Naive thymus-derived CD4-positive, alpha-beta T cell (primary cell): ENCODE measurements at regions of chr9 and their contacts with region 1.

Region 1: GRCh38 chr9:88889386-88889785 is 101.9 kb upstream of the S1PR3 start:
- DNase-seq: no peak
- ATAC-seq: no peak
- H3K4me3 ChIP-seq: no peak overlapping the region
- H3K4me3 Mint-ChIP-seq: no peak overlapping the region
- H3K27ac ChIP-seq: no peak overlapping the region
- H3K27ac Mint-ChIP-seq: no peak overlapping the region
- H3K4me1 ChIP-seq: no peaks in the 10 kb centered on the region
- H3K4me1 Mint-ChIP-seq: peaks cover under 1 to 40% (median 24%) of the 10 kb centered on the region in 7 donors
- H3K27me3 ChIP-seq: no peaks in the 10 kb centered on the region
- H3K27me3 Mint-ChIP-seq: peaks cover 6 to 34% (median 20%) of the 10 kb centered on the region in 5 donors

Region 2: GRCh38 chr9:88835038-88835466 is 54.3 kb before region 1 on chr9:
- CTCF ChIA-PET with region 1: no interaction called
- POLR2A ChIA-PET with region 1: no interaction called
- intact Hi-C with region 1: loop called in 1 of 2 experiments (anchors 10 kb)
- DNase-seq: peak in 7 of 9 donors; percentile 45 to 81 (median 79)
- ATAC-seq: peak; percentile 95
- H3K4me3 ChIP-seq: no peak overlapping the region
- H3K4me3 Mint-ChIP-seq: peak overlapping the region in 9 of 10 donors; percentile 2 to 82 (median 64)
- H3K27ac ChIP-seq: no peak overlapping the region
- H3K27ac Mint-ChIP-seq: peak overlapping the region in 6 of 9 donors; percentile 22 to 90 (median 69)
- H3K4me1 ChIP-seq: peaks cover 16 to 25% of the 10 kb centered on the region in 2 donors
- H3K4me1 Mint-ChIP-seq: peaks cover 9 to 35% (median 27%) of the 10 kb centered on the region in 7 donors
- H3K27me3 ChIP-seq: peaks cover 0 to 19% of the 10 kb centered on the region in 2 donors
- H3K27me3 Mint-ChIP-seq: peaks cover 55 to 82% (median 72%) of the 10 kb centered on the region in 5 donors

Region 3: GRCh38 chr9:88938625-88939024 is 49.2 kb after region 1 on chr9:
- CTCF ChIA-PET with region 1: no interaction called
- POLR2A ChIA-PET with region 1: no interaction called
- intact Hi-C with region 1: loop called in 1 of 2 experiments (anchors 1 kb)
- DNase-seq: no peak
- ATAC-seq: no peak
- H3K4me3 ChIP-seq: no peak overlapping the region
- H3K4me3 Mint-ChIP-seq: peak overlapping the region in 1 of 10 donors; percentile 2
- H3K27ac ChIP-seq: no peak overlapping the region
- H3K27ac Mint-ChIP-seq: no peak overlapping the region
- H3K4me1 ChIP-seq: no peaks in the 10 kb centered on the region
- H3K4me1 Mint-ChIP-seq: peaks cover 0 to 4% (median 0%) of the 10 kb centered on the region in 7 donors
- H3K27me3 ChIP-seq: no peaks in the 10 kb centered on the region
- H3K27me3 Mint-ChIP-seq: peaks cover 0 to 20% (median 10%) of the 10 kb centered on the region in 5 donors

Region 4: DNA sequence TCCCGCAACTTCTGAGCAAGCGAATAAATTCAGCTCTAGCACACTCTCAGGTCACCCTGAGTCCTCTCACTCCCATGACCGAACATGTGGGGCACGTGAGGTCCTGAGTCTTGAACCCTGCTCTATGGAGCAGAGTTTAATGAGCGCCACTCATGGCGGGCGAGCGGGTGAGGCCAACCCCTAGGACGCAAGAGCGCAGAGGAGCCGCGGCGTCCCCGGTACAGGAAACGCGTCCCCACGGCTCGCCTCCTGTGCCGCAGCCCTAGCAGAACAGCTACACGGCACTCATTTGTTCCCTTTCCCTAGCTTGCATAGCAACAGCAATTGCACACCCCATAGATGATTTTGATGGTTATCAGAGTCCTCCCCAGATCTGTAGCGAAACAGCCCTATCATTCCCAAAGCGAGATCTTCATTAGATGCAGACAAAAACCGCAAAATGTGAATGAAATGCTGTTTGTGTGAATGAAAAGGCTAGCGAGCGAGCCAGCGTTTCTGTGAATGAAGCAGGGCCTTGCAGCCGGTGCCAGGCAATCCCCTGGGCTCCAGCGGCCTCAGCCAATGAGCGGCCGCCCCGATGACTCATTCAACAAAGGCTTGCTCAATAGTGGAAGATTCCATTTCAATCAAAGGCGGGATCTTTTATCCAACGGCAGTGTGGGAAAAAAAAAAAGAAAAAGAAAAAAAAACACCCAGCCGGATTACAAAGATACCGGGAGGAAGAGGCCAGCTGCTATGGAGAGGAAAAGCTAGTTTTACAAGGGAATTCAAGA is 290.7 kb after region 1 on chr9:
- CTCF ChIA-PET with region 1: no interaction called
- POLR2A ChIA-PET with region 1: no interaction called
- intact Hi-C with region 1: no loop called
- DNase-seq: peak in 4 of 9 donors; percentile 7 to 32 (median 11)
- ATAC-seq: peak; percentile 53
- H3K4me3 ChIP-seq: peak overlapping the region; percentile 35
- H3K4me3 Mint-ChIP-seq: peak overlapping the region; percentile 12 to 83 (median 64)
- H3K27ac ChIP-seq: no peak overlapping the region
- H3K27ac Mint-ChIP-seq: no peak overlapping the region
- H3K4me1 ChIP-seq: peaks cover 0 to 12% of the 10 kb centered on the region in 2 donors
- H3K4me1 Mint-ChIP-seq: peaks cover 9 to 27% (median 19%) of the 10 kb centered on the region in 7 donors
- H3K27me3 ChIP-seq: peaks cover 3 to 6% of the 10 kb centered on the region in 2 donors
- H3K27me3 Mint-ChIP-seq: peaks cover 49 to 73% (median 65%) of the 10 kb centered on the region in 5 donors